ENCODE measurements at regions of chr12 and their contacts with region 1.

Region 1: GRCh38 chr12:103626498-103626897 is 39.4 kb downstream of the STAB2 start:
- DNase-seq: no peak
- H3K4me3 ChIP-seq: no peak overlapping the region
- H3K27ac ChIP-seq: no peak overlapping the region
- H3K4me1 ChIP-seq: no peaks in the 10 kb centered on the region
- H3K27me3 ChIP-seq: no peaks in the 10 kb centered on the region
- CTCF ChIP-seq: peak; percentile 38

Region 2: GRCh38 chr12:103771466-103771865 is 145.0 kb after region 1 on chr12:
- intact Hi-C with region 1: loop called (anchors 10 kb)
- DNase-seq: peak; percentile 37
- H3K4me3 ChIP-seq: no peak overlapping the region
- H3K27ac ChIP-seq: no peak overlapping the region
- H3K4me1 ChIP-seq: no peaks in the 10 kb centered on the region
- H3K27me3 ChIP-seq: no peaks in the 10 kb centered on the region
- CTCF ChIP-seq: peak; percentile 16

Region 3: DNA sequence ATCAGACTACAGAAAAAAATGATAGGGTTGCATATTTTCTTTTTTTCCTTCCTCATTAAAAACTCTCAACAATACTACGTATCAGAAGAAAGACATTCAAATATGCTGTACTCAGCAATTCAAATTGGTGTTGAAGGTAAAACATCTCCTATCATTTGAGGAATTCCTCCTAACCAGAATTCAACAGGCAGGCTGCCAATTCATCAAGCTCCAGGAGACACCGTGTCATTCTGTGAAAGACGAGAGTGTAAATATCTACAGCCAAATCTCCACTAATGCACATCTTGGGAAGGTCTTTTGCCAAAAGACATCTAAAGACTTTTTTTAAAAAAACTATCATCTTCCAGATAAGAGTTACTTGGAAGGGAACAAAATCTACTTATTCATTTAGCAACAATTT is 187.9 kb after region 1 on chr12:
- intact Hi-C with region 1: no loop called
- DNase-seq: no peak
- H3K4me3 ChIP-seq: no peak overlapping the region
- H3K27ac ChIP-seq: no peak overlapping the region
- H3K4me1 ChIP-seq: no peaks in the 10 kb centered on the region
- H3K27me3 ChIP-seq: no peaks in the 10 kb centered on the region
- CTCF ChIP-seq: no peak

Region 4: GRCh38 chr12:103868215-103868614 is 241.7 kb after region 1 on chr12:
- intact Hi-C with region 1: loop called (anchors 2 kb)
- DNase-seq: no peak
- H3K4me3 ChIP-seq: no peak overlapping the region
- H3K27ac ChIP-seq: no peak overlapping the region
- H3K4me1 ChIP-seq: no peaks in the 10 kb centered on the region
- H3K27me3 ChIP-seq: no peaks in the 10 kb centered on the region
- CTCF ChIP-seq: no peak

Measured in colonic mucosa (tissue), 4 donors.